SK-N-SH (cell line): ENCODE measurements at regions of chr17 and their contacts with region 1.

Region 1: DNA sequence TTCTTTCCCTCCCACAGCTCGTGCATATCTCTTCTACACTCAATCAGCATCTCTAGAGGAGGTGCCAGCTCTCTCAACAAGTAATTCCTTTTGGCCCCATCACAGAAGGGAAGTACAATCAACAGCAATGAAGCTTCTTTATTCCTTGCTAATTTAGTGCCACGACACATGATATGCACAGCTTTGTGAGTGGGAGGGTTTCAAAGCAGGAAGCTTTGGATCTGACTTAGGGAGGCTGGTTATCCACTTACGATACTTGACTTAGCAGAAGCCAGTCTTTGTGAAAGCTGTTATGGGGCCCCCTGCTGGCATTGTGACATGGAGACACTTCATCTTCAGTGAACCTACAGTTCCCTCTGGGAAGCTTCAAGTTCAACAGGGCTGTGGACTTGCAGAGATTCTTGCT is 81.0 kb downstream of the TMEM100 start:
- DNase-seq: peak; percentile 49
- H3K4me3 ChIP-seq: no peak overlapping the region
- H3K27ac ChIP-seq: no peak overlapping the region
- H3K4me1 ChIP-seq: no peaks in the 10 kb centered on the region; a peak in 1 of 4 replicates
- H3K27me3 ChIP-seq: no peaks in the 10 kb centered on the region; the same call in 1 of the 2 replicates
- CTCF ChIP-seq: peak; percentile 78
- EP300 ChIP-seq: no peak
- RAD21 ChIP-seq: peak; percentile 78

Region 2: GRCh38 chr17:55410722-55411462 is 230.8 kb before region 1 on chr17:
- CTCF ChIA-PET with region 1: no interaction called
- POLR2A ChIA-PET with region 1: no interaction called
- DNase-seq: peak; percentile 53
- H3K4me3 ChIP-seq: no peak overlapping the region
- H3K27ac ChIP-seq: peak overlapping the region; percentile 0 to 96; a peak in 3 of 4 replicates
- H3K4me1 ChIP-seq: peaks cover 0 to 18% of the 10 kb centered on the region in 2 experiments; a peak in 2 of 4 replicates
- H3K27me3 ChIP-seq: no peaks in the 10 kb centered on the region
- CTCF ChIP-seq: no peak
- EP300 ChIP-seq: no peak
- RAD21 ChIP-seq: no peak; the same call in 1 of the 2 replicates

Region 3: GRCh38 chr17:55496094-55496881 is 145.4 kb before region 1 on chr17:
- CTCF ChIA-PET with region 1: no interaction called
- POLR2A ChIA-PET with region 1: no interaction called
- DNase-seq: no peak
- H3K4me3 ChIP-seq: no peak overlapping the region
- H3K27ac ChIP-seq: no peak overlapping the region; a peak in 1 of 4 replicates
- H3K4me1 ChIP-seq: peaks cover 0 to 4% of the 10 kb centered on the region in 2 experiments; a peak in 1 of 4 replicates
- H3K27me3 ChIP-seq: no peaks in the 10 kb centered on the region
- CTCF ChIP-seq: no peak
- EP300 ChIP-seq: no peak
- RAD21 ChIP-seq: peak; percentile 13; the same call in 1 of the 2 replicates

Region 4: GRCh38 chr17:55601874-55602364 is 39.8 kb before region 1 on chr17:
- CTCF ChIA-PET with region 1: interaction called, 20 read pairs
- POLR2A ChIA-PET with region 1: no interaction called
- DNase-seq: peak; percentile 52
- H3K4me3 ChIP-seq: no peak overlapping the region
- H3K27ac ChIP-seq: no peak overlapping the region
- H3K4me1 ChIP-seq: no peaks in the 10 kb centered on the region
- H3K27me3 ChIP-seq: no peaks in the 10 kb centered on the region
- CTCF ChIP-seq: peak; percentile 83
- EP300 ChIP-seq: no peak
- RAD21 ChIP-seq: peak; percentile 92

Region 5: DNA sequence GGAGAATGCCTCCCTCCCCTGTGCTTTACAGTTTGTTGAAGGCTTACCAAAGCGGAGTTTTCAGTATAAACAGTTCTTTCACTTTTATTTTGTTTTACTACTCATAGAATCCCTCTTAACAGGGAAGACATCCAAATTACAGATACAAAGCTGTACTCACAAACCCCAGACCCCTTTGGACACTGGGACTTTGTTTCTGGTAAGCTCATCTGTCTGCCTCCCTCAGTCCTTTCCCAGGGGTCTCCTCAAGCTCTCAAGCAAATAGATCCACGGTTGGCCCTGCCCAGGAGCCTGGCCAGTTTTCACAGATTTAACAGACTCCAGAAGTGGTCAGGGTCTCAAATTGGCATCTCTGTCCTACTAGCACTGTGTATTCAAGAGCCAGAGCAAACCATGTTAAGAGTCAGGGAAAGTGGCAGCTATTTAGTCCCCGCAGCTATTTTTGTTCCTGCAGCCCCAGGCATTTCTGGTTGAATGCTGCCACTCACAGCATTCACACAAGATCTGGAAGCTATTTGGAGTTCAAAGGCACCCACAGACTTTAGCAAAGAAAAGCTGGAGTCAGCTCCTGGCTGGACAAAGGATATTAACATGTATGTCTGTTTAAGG is 26.7 kb after region 1 on chr17:
- CTCF ChIA-PET with region 1: interaction called, 14 read pairs
- POLR2A ChIA-PET with region 1: no interaction called
- DNase-seq: no peak
- H3K4me3 ChIP-seq: no peak overlapping the region
- H3K27ac ChIP-seq: no peak overlapping the region
- H3K4me1 ChIP-seq: peaks cover 0 to 8% of the 10 kb centered on the region in 2 experiments; a peak in 2 of 4 replicates
- H3K27me3 ChIP-seq: no peaks in the 10 kb centered on the region
- CTCF ChIP-seq: no peak
- EP300 ChIP-seq: no peak
- RAD21 ChIP-seq: no peak

Region 6: GRCh38 chr17:55726440-55726839 is 84.8 kb after region 1 on chr17:
- CTCF ChIA-PET with region 1: interaction called, 25 read pairs
- POLR2A ChIA-PET with region 1: no interaction called
- DNase-seq: peak; percentile 73
- H3K4me3 ChIP-seq: 0 out of 4 replicates have a peak overlapping the region, but pooled peaks of 1 of the 2 experiments have one; percentile 19
- H3K27ac ChIP-seq: peak overlapping the region; percentile 61 to 97
- H3K4me1 ChIP-seq: peaks cover 46 to 56% of the 10 kb centered on the region in 2 experiments
- H3K27me3 ChIP-seq: no peaks in the 10 kb centered on the region
- CTCF ChIP-seq: no peak
- EP300 ChIP-seq: peak; percentile 68 to 71; a peak in 3 of 4 replicates
- RAD21 ChIP-seq: no peak